Heart right ventricle (tissue), 16 donors: ENCODE measurements at regions of chr20 and their contacts with region 1.

Region 1: DNA sequence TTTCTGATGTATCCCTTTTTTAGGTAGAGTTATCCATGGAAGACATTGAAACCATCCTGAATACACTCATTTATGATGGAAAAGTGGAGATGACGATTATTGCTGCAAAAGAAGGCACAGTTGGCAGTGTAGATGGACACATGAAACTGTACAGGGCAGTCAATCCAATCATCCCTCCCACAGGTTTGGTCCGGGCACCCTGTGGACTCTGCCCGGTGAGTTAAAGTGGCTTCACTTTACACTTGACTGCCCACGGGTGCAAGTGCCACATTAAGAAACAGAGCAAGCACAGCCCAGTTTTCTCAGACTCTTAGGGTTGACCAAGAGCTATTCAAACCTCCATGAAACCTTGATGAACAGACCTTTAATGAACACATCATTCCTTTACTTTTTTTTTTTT is 14.4 kb downstream of the POLR3F start:
- DNase-seq: no peak
- ATAC-seq: no peak
- H3K4me3 ChIP-seq: no peak overlapping the region
- H3K27ac ChIP-seq: no peak overlapping the region
- H3K4me1 ChIP-seq: no peaks in the 10 kb centered on the region
- H3K27me3 ChIP-seq: no peaks in the 10 kb centered on the region
- CTCF ChIP-seq: no peak

Region 2: GRCh38 chr20:18416486-18416885 is 65.1 kb before region 1 on chr20:
- intact Hi-C with region 1: no loop called
- DNase-seq: no peak
- ATAC-seq: no peak
- H3K4me3 ChIP-seq: no peak overlapping the region
- H3K27ac ChIP-seq: no peak overlapping the region
- H3K4me1 ChIP-seq: peaks cover 0 to 4% (median 0%) of the 10 kb centered on the region in 9 donors
- H3K27me3 ChIP-seq: no peaks in the 10 kb centered on the region
- CTCF ChIP-seq: no peak

Region 3: GRCh38 chr20:18553746-18554145 is 72.2 kb after region 1 on chr20:
- intact Hi-C with region 1: loop called in 1 of 10 experiments (anchors 10 kb)
- DNase-seq: no peak
- ATAC-seq: no peak
- H3K4me3 ChIP-seq: no peak overlapping the region
- H3K27ac ChIP-seq: no peak overlapping the region
- H3K4me1 ChIP-seq: no peaks in the 10 kb centered on the region
- H3K27me3 ChIP-seq: no peaks in the 10 kb centered on the region
- CTCF ChIP-seq: no peak